Transverse colon (tissue), 4 donors: ENCODE measurements at regions of chr14 and their contacts with region 1.

Region 1: GRCh38 chr14:62117010-62117750 is 355.0 kb downstream of the SNAPC1 start:
- DNase-seq: peak; percentile 48
- H3K4me3 ChIP-seq: peak overlapping the region in 1 of 4 donors; percentile 25
- H3K27ac ChIP-seq: no peak overlapping the region
- H3K4me1 ChIP-seq: peaks cover 0 to 10% (median 4%) of the 10 kb centered on the region in 4 donors
- H3K27me3 ChIP-seq: peaks cover 69% of the 10 kb centered on the region
- CTCF ChIP-seq: no peak
- EP300 ChIP-seq: no peak
- POLR2A ChIP-seq: no peak

Region 2: DNA sequence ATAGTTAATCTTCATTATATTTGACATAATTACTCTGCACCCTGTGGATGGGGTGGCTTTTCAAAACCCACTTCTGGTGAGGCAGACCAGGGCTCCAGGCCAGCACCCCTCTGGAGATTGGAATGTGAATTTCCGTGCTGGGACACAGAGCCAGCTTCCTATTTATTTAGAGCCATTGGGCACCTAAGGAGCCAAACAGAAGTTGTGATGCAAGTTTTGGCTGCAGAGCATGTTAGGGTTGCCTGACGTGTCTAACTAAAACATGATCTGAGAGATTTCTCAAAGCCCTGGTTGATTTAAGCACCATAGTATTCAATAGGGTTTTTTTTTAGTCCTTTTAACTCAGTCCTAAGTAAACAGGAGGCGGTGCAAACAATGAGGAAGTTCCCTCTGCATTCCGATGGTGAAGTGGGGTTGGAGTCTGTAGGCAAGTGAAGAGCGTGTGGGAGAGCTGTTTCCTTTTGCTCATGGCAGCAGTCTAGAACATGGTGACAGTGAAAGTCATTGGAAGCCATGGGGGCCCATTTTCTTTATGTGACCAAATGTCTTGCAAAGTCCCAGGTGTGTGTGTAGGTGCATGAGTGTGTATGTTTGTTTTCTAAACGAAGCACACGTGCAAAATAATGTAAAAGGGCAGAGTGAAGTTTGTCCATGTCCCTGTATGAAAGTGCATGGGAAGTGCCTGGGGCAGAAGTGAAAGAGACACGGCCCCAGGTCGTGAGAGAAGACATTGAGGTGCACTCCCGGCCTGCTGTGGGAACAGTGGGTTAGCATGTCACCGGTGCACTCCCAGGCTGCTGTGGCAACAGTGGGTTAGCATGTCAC is 678.1 kb before region 1 on chr14:
- in situ Hi-C with region 1: loop called in 1 of 4 experiments (anchors 25 kb)
- intact Hi-C with region 1: no loop called
- DNase-seq: peak; percentile 36
- H3K4me3 ChIP-seq: peak overlapping the region in 1 of 4 donors; percentile 8
- H3K27ac ChIP-seq: peak overlapping the region; percentile 19 to 58 (median 30)
- H3K4me1 ChIP-seq: peaks cover 4 to 32% (median 10%) of the 10 kb centered on the region in 4 donors
- H3K27me3 ChIP-seq: no peaks in the 10 kb centered on the region
- CTCF ChIP-seq: no peak
- EP300 ChIP-seq: no peak
- POLR2A ChIP-seq: no peak

Region 3: GRCh38 chr14:61860294-61860918 is 256.8 kb before region 1 on chr14:
- in situ Hi-C with region 1: no loop called
- intact Hi-C with region 1: no loop called
- DNase-seq: peak; percentile 52
- H3K4me3 ChIP-seq: no peak overlapping the region
- H3K27ac ChIP-seq: no peak overlapping the region
- H3K4me1 ChIP-seq: no peaks in the 10 kb centered on the region
- H3K27me3 ChIP-seq: no peaks in the 10 kb centered on the region
- CTCF ChIP-seq: peak; percentile 56 to 71 (median 60)
- EP300 ChIP-seq: no peak
- POLR2A ChIP-seq: no peak

Region 4: DNA sequence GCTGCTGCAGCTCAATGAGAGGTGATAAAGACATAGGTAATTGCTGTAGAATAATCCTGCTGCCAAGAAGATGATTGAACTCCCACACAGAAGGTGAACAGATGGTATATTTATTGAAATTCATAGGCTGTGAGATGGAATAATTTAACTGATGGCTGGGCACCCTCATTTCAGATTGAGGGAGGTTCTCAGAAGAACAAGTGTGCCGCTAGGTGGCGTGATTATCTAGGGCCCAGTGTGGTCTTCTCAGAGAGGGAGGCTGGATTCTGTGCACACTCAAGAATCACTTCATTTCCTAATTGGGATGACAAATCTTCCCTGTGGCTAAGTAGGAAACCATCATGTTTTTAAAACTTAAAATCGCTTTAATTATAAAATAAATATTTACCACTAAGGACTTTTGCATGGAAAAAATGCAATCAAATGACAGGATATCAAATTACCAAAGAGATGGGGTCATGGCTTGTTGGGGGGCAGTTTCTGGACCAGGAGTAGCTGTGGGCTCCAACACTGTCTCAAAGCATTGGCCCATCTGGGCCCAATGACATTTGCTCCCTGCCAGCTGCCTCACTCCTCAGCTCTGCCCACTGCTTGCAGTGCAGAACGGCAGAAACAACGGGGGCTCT is 222.6 kb before region 1 on chr14:
- in situ Hi-C with region 1: loop called in 2 of 4 experiments (anchors 10 to 25 kb)
- intact Hi-C with region 1: no loop called
- DNase-seq: peak; percentile 60
- H3K4me3 ChIP-seq: no peak overlapping the region
- H3K27ac ChIP-seq: no peak overlapping the region
- H3K4me1 ChIP-seq: no peaks in the 10 kb centered on the region
- H3K27me3 ChIP-seq: no peaks in the 10 kb centered on the region
- CTCF ChIP-seq: peak; percentile 39 to 57 (median 53)
- EP300 ChIP-seq: no peak
- POLR2A ChIP-seq: no peak

Region 5: DNA sequence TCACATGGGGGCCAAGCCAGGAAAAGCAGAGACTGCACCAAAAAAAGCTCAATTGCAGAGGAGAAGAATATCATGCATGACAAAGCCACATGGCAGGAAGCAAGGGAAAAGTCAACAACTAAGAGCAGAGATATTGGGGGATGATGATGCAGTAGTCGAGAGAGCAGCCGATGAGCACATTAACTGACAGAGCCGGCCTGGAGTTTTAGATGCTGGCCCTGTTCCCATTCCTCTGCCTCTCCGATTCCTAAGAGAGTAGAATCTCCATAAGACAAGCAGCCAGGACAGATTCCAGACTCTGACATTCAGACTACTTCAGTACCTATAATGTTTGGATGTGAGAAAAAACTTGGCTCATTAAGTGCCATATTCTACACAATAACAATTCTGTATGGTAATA is 772.2 kb after region 1 on chr14:
- in situ Hi-C with region 1: no loop called
- intact Hi-C with region 1: no loop called
- DNase-seq: no peak
- H3K4me3 ChIP-seq: no peak overlapping the region
- H3K27ac ChIP-seq: no peak overlapping the region
- H3K4me1 ChIP-seq: no peaks in the 10 kb centered on the region
- H3K27me3 ChIP-seq: no peaks in the 10 kb centered on the region
- CTCF ChIP-seq: no peak
- EP300 ChIP-seq: no peak
- POLR2A ChIP-seq: no peak